ENCODE measurements at regions of chr16 and their contacts with region 1.

Region 1: DNA sequence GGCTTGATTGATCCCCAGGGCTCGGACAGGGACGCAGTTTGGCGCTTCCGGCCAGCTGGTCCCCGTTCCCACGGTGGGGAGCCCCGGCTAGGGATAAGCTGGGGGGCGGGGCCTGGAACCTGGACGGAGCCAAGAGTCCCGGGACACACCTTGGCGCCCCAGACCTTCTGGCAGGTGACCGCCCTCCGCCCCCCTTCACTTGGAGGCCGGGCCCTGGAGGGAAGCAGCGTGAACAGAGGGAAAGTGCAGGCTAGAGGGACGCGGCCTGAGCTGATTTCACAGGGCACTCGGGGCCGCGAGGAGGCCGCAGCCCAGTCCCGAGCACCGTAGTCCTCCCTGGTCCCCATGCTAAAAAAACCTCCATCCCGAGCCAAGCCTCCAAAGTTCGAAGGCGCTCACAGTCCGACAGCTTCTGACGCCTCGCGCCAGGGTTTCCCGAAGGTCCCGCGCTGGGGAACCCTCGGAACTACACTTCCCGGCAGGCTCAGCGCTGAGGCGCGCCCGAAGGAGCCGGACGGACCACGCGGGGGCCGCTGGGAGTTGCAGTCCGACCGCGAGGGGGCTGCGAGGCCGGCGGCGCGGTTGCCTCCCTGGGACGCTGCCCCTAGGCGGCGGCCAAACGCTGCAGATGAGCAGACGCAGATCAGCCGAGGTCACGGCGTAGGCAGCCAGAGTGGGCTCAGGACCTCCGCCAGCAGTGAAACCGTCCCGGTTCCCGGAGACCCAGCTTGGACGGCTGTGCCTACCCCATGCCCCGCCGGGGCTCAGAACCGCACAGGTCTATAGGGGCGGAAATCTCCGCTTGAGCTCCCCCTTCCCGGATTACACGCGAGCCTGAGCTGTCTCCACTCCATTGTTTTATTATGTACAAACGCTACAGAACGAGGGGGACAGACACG is at the start of gene TBX6:
- DNase-seq: peak; percentile 92
- H3K4me3 ChIP-seq: peak within 1 kb of the TSS; percentile 6 to 53 (median 47)
- H3K27ac ChIP-seq: peak within 1 kb of the TSS; percentile 46
- H3K4me1 ChIP-seq: peaks cover 23% of the 10 kb centered on the region
- H3K27me3 ChIP-seq: no peaks in the 10 kb centered on the region
- CTCF ChIP-seq: peak; percentile 56 to 86
- POLR2A ChIP-seq: peak; percentile 62
- total RNA-seq, gene TBX6: 0.42 and 0.60 TPM in 2 replicates

Region 2: DNA sequence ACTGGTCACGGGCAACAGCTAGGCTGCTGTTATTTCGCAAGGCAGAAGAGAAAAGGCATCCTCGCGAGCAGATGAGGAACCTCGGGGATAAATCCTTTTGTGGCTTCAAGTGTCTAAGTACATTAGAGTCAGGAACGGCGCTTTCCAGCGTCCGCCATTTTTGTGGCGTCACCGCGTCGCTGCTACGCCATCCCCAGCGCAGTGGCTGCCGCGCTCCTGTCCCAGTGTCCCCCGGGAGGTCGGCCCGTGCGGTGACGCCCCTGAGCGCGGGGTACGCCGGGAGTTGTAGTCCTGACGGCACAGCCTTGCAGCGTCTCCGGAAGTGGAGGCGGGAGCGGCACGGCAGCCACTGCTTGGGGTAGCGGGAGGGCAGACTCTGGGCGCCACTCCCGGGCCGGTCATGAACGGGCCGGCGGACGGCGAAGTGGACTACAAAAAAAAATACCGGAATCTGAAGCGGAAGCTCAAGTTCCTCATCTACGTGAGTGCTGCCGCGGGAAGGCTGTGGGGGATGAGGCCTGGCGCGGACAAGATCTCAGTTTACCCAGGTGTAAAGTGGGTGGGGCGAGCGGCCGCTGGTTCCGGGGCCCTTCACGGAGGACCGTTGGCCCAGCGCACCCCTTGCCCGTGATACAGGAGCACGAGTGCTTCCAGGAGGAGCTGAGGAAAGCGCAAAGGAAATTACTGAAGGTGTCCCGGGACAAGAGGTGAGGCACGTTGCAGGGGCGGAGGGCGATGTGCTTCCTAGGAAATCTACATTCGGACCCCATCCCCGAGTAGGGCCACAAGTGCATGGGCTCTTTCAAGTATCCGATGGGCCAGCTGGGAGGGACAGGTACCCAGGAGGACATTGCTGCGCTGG is 95.6 kb before region 1 on chr16 and contains the start of gene INO80E:
- CTCF ChIA-PET with region 1: no interaction called
- POLR2A ChIA-PET with region 1: no interaction called
- dilution Hi-C with region 1: no loop called
- intact Hi-C with region 1: no loop called
- DNase-seq: peak; percentile 95
- H3K4me3 ChIP-seq: peak within 1 kb of the TSS; percentile 70 to 81 (median 73)
- H3K27ac ChIP-seq: peak within 1 kb of the TSS; percentile 76
- H3K4me1 ChIP-seq: peaks cover 22% of the 10 kb centered on the region
- H3K27me3 ChIP-seq: no peaks in the 10 kb centered on the region
- CTCF ChIP-seq: no peak
- POLR2A ChIP-seq: no peak
- total RNA-seq, gene INO80E: 76.4 and 84.1 TPM in 2 replicates

Region 3: DNA sequence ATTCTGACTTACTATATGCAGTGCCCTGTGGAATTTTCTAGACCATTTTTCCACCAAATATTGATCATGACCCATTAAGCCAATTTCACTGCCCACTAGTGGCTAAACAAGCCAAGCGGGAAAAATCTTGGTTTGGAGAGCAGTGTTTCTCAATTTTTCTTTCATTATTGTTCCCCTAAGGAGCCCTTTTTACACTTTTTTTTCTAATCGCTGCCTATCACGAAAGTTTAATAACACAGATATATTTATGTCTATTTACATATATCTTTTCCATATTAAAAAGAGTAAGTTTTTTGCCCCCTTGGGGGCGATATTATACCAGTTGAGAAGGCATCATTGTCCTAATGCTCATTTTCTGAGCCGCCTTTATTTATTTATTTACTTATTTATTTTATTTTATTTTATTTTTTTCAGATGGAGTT is 49.9 kb before region 1 on chr16:
- CTCF ChIA-PET with region 1: interaction called, 32 read pairs
- POLR2A ChIA-PET with region 1: no interaction called
- dilution Hi-C with region 1: no loop called
- intact Hi-C with region 1: loop called (anchors 1 kb)
- DNase-seq: peak; percentile 66
- H3K4me3 ChIP-seq: no peak overlapping the region
- H3K27ac ChIP-seq: no peak overlapping the region
- H3K4me1 ChIP-seq: no peaks in the 10 kb centered on the region
- H3K27me3 ChIP-seq: no peaks in the 10 kb centered on the region
- CTCF ChIP-seq: peak in 1 of 2 donors; percentile 23
- POLR2A ChIP-seq: no peak

Region 4: DNA sequence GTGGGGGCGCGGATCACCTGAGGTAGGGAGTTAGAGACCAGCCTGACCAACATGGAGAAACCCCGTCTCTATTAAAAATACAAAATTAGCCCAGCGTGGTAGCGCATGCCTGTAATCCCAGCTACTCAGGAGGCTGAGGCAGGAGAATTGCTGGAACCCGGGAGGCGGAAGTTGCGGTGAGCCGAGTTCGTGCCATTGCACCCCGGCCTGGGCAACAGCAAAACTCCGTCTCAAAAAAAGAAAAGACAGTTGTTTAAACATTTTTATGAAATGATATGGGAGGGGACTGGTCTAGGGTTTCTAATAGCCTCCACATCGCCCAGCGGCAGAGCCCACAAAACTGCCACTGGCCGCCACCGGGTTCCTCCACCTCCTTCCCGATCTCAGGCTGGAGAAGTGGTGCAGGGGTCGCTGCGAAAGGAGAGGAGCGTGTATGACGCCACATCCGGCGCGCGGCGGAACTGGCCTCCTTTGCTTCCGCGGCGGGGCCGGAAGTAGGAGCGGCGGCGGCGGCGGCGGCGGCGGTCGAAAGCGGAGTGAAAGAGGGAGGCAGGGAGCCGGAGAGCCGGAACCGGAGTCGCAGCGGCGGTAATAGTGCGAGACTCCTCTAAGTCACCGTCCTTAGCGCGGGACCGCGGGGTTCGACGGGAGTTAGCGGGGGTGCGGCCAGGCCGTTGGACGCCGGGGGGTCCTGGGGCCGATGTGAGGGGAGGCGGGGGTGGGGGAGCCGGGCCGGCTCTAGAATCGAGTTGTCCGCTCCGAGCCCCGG is 16.0 kb before region 1 on chr16 and contains the start of gene PPP4C:
- CTCF ChIA-PET with region 1: interaction called, 33 read pairs
- POLR2A ChIA-PET with region 1: interaction called, 10 read pairs
- dilution Hi-C with region 1: no loop called
- intact Hi-C with region 1: loop called (anchors 2 kb)
- DNase-seq: peak; percentile 85
- H3K4me3 ChIP-seq: peak within 1 kb of the TSS; percentile 58 to 78 (median 76)
- H3K27ac ChIP-seq: peak within 1 kb of the TSS; percentile 81
- H3K4me1 ChIP-seq: peaks cover 24% of the 10 kb centered on the region
- H3K27me3 ChIP-seq: no peaks in the 10 kb centered on the region
- CTCF ChIP-seq: no peak
- POLR2A ChIP-seq: peak; percentile 97
- total RNA-seq, gene PPP4C: 159 and 167 TPM in 2 replicates

Region 5: DNA sequence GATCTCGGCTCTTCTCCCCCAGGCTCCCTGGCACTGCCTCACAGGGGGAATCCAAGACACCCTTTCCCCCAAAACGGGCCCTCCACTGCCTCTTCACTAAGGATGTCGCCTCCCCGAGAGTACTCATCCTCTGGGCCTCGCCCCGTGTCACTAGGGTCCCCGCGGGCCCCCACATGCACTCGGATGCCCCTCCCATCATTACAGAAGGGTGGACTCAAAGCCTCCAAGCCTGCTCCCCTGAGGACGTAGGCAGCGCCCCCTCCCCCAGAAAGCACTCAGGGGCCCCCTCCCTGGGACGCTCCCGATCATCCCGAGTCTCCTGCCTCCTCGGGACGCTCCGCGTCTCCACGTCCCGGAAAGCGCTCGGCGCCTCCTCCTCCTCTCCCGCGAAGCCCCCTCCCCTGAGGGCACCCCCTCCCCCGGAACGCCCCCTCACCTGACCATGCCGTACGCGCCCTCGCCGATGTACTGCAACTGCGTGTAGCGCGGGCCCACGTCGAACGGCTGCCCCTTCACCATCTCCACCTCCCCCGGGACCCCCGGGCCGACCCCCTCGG is 31.0 kb after region 1 on chr16:
- CTCF ChIA-PET with region 1: interaction called, 10 read pairs
- POLR2A ChIA-PET with region 1: interaction called, 4 read pairs
- dilution Hi-C with region 1: no loop called
- intact Hi-C with region 1: loop called (anchors 1 kb)
- DNase-seq: peak; percentile 39
- H3K4me3 ChIP-seq: peak overlapping the region; percentile 65 to 96 (median 75)
- H3K27ac ChIP-seq: peak overlapping the region; percentile 50
- H3K4me1 ChIP-seq: peaks cover 14% of the 10 kb centered on the region
- H3K27me3 ChIP-seq: no peaks in the 10 kb centered on the region
- CTCF ChIP-seq: no peak
- POLR2A ChIP-seq: peak; percentile 50

Region 6: GRCh38 chr16:30602616-30603277 is 511.0 kb after region 1 on chr16:
- CTCF ChIA-PET with region 1: interaction called, 11 read pairs
- POLR2A ChIA-PET with region 1: no interaction called
- dilution Hi-C with region 1: no loop called
- intact Hi-C with region 1: no loop called
- DNase-seq: no peak
- H3K4me3 ChIP-seq: no peak overlapping the region
- H3K27ac ChIP-seq: no peak overlapping the region
- H3K4me1 ChIP-seq: no peaks in the 10 kb centered on the region
- H3K27me3 ChIP-seq: no peaks in the 10 kb centered on the region
- CTCF ChIP-seq: no peak
- POLR2A ChIP-seq: no peak

Region 7: GRCh38 chr16:30715737-30716445 is 624.2 kb after region 1 on chr16:
- CTCF ChIA-PET with region 1: no interaction called
- POLR2A ChIA-PET with region 1: no interaction called
- dilution Hi-C with region 1: no loop called
- intact Hi-C with region 1: no loop called
- DNase-seq: no peak
- H3K4me3 ChIP-seq: no peak overlapping the region
- H3K27ac ChIP-seq: no peak overlapping the region
- H3K4me1 ChIP-seq: peaks cover 5% of the 10 kb centered on the region
- H3K27me3 ChIP-seq: no peaks in the 10 kb centered on the region
- CTCF ChIP-seq: no peak
- POLR2A ChIP-seq: no peak

Measured in endothelial cell of umbilical vein (primary cell).